AG04450 (cell line): ENCODE measurements at regions of chr13 and their contacts with region 1.

Region 1: GRCh38 chr13:80363890-80364503 is 23.1 kb upstream of the SPRY2 start:
- DNase-seq: no peak
- H3K4me3 ChIP-seq: no peak overlapping the region
- H3K27ac ChIP-seq: no peak overlapping the region
- H3K27me3 ChIP-seq: no peaks in the 10 kb centered on the region
- CTCF ChIP-seq: peak; percentile 83

Region 2: GRCh38 chr13:79679334-79679733 is 684.7 kb before region 1 on chr13:
- CTCF ChIA-PET with region 1: interaction called, 33 read pairs
- POLR2A ChIA-PET with region 1: no interaction called
- DNase-seq: peak; percentile 26
- H3K4me3 ChIP-seq: no peak overlapping the region
- H3K27ac ChIP-seq: no peak overlapping the region
- H3K27me3 ChIP-seq: no peaks in the 10 kb centered on the region
- CTCF ChIP-seq: peak; percentile 74

Region 3: DNA sequence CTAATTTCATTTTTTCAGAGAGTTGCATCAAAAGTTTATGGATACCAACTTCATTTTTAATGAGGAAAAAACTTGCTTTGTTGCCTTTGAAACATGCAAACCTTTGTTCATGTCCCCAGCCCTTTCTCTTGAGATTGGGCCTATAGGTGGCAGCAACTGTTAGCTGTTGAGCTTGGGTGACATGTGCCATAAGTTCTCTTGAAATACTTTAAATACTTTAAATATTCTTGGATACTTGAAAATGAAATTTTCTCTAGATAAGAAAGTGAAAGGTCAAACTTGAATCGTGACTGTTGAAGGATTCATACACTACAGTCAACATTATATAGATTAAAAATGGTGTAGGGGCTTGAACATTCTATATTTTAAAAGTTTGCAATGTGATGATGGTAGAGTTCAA is 588.2 kb before region 1 on chr13:
- CTCF ChIA-PET with region 1: interaction called, 12 read pairs
- POLR2A ChIA-PET with region 1: no interaction called
- DNase-seq: peak; percentile 47
- H3K4me3 ChIP-seq: no peak overlapping the region
- H3K27ac ChIP-seq: no peak overlapping the region
- H3K27me3 ChIP-seq: no peaks in the 10 kb centered on the region
- CTCF ChIP-seq: peak; percentile 76

Region 4: GRCh38 chr13:79812070-79812850 is 551.7 kb before region 1 on chr13:
- CTCF ChIA-PET with region 1: interaction called, 10 read pairs
- POLR2A ChIA-PET with region 1: no interaction called
- DNase-seq: no peak
- H3K4me3 ChIP-seq: no peak overlapping the region
- H3K27ac ChIP-seq: no peak overlapping the region
- H3K27me3 ChIP-seq: no peaks in the 10 kb centered on the region
- CTCF ChIP-seq: no peak